ENCODE measurements at regions of chrX and their contacts with region 1.

Region 1: GRCh38 chrX:102067966-102068708 is 57.3 kb upstream of the TCEAL2 start:
- DNase-seq: peak; percentile 38
- H3K4me3 Mint-ChIP-seq: no peak overlapping the region
- H3K27ac Mint-ChIP-seq: no peak overlapping the region
- H3K4me1 Mint-ChIP-seq: peaks cover 7% of the 10 kb centered on the region
- H3K27me3 Mint-ChIP-seq: peaks cover 37% of the 10 kb centered on the region
- CTCF ChIP-seq: peak; percentile 74

Region 2: GRCh38 chrX:101942889-101943288 is 125.2 kb before region 1 on chrX:
- CTCF ChIA-PET with region 1: no interaction called
- POLR2A ChIA-PET with region 1: no interaction called
- intact Hi-C with region 1: no loop called
- DNase-seq: peak; percentile 3
- H3K4me3 Mint-ChIP-seq: no peak overlapping the region
- H3K27ac Mint-ChIP-seq: no peak overlapping the region
- H3K4me1 Mint-ChIP-seq: no peaks in the 10 kb centered on the region
- H3K27me3 Mint-ChIP-seq: peaks cover 41% of the 10 kb centered on the region
- CTCF ChIP-seq: no peak

Region 3: GRCh38 chrX:102008901-102009300 is 59.2 kb before region 1 on chrX:
- CTCF ChIA-PET with region 1: no interaction called
- POLR2A ChIA-PET with region 1: no interaction called
- intact Hi-C with region 1: no loop called
- DNase-seq: no peak
- H3K4me3 Mint-ChIP-seq: no peak overlapping the region
- H3K27ac Mint-ChIP-seq: no peak overlapping the region
- H3K4me1 Mint-ChIP-seq: no peaks in the 10 kb centered on the region
- H3K27me3 Mint-ChIP-seq: peaks cover 10% of the 10 kb centered on the region
- CTCF ChIP-seq: no peak

Region 4: GRCh38 chrX:102042372-102043325 is 25.5 kb before region 1 on chrX:
- CTCF ChIA-PET with region 1: interaction called, 10 read pairs
- POLR2A ChIA-PET with region 1: no interaction called
- intact Hi-C with region 1: no loop called
- DNase-seq: peak; percentile 81
- H3K4me3 Mint-ChIP-seq: no peak overlapping the region
- H3K27ac Mint-ChIP-seq: peak overlapping the region; percentile 55
- H3K4me1 Mint-ChIP-seq: no peaks in the 10 kb centered on the region
- H3K27me3 Mint-ChIP-seq: peaks cover 17% of the 10 kb centered on the region
- CTCF ChIP-seq: no peak

Measured in MCF 10A (cell line).